ENCODE measurements at regions of chr17 and their contacts with region 1.

Region 1: GRCh38 chr17:81591971-81592370 is 39.8 kb upstream of the FAAP100 start:
- DNase-seq: no peak
- ATAC-seq: no peak
- H3K4me3 ChIP-seq: no peak overlapping the region
- H3K27ac ChIP-seq: no peak overlapping the region
- H3K4me1 ChIP-seq: no peaks in the 10 kb centered on the region
- H3K27me3 ChIP-seq: no peaks in the 10 kb centered on the region

Region 2: DNA sequence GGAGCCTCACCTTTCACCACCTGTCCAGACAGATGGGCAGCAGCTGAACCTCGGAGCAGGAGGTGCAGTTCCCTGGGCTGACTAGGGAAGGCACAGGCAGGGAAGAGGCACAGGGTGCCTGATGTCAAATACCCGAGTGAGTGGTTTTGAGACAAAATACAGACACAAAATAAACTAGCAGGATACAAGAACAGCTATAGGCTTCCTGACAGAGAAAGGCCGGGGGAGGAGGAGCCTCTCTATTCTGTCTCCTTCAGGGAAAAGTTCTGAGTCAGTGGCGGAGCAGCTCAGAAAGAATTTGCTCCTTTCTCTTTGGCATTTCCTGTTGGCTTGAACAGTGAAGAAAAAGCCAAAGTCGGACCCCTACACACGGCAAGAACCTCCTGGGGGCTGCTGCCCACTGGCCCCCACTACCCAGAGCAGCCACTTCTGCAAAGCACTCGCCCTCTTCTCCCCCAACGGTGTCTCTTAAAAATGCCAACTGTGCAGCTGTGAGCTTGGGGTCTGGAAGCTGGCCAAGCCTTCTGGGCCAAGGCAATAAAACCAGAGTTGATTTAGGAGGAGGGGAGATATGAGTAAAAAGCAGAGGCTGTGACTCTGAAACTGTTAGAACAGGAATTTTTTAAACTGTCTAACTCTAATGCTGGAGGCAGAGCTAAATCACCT is 25.4 kb before region 1 on chr17:
- intact Hi-C with region 1: loop called in 1 of 2 experiments (anchors 1 kb)
- DNase-seq: peak; percentile 86 to 88
- ATAC-seq: peak; percentile 85
- H3K4me3 ChIP-seq: peak overlapping the region in 1 of 2 donors; percentile 28
- H3K27ac ChIP-seq: peak overlapping the region; percentile 89 to 99
- H3K4me1 ChIP-seq: peaks cover 0 to 4% of the 10 kb centered on the region in 2 donors
- H3K27me3 ChIP-seq: no peaks in the 10 kb centered on the region